Dendritic cell treated with granulocyte-macrophage colony-stimulating factor and Interleukin-4, amounts not matched to agents 40 ng/mL and 50 ng/mL, for 4 days (primary cell): ENCODE measurements at regions of chr6 and their contacts with region 1.

Region 1: GRCh38 chr6:134480593-134480992 is 162.7 kb upstream of the SGK1 start:
- H3K4me3 Mint-ChIP-seq: no peak overlapping the region
- H3K27ac Mint-ChIP-seq: no peak overlapping the region
- H3K4me1 Mint-ChIP-seq: peaks cover 7% of the 10 kb centered on the region
- H3K27me3 Mint-ChIP-seq: peaks cover 6% of the 10 kb centered on the region

Region 2: GRCh38 chr6:134363318-134364039 is 117.1 kb before region 1 on chr6:
- intact Hi-C with region 1: no loop called
- H3K4me3 Mint-ChIP-seq: no peak overlapping the region
- H3K27ac Mint-ChIP-seq: no peak overlapping the region
- H3K4me1 Mint-ChIP-seq: peaks cover 14% of the 10 kb centered on the region
- H3K27me3 Mint-ChIP-seq: no peaks in the 10 kb centered on the region

Region 3: GRCh38 chr6:134619789-134620188 is 139.2 kb after region 1 on chr6:
- intact Hi-C with region 1: loop called (anchors 10 kb)
- H3K4me3 Mint-ChIP-seq: no peak overlapping the region
- H3K27ac Mint-ChIP-seq: no peak overlapping the region
- H3K4me1 Mint-ChIP-seq: peaks cover 21% of the 10 kb centered on the region
- H3K27me3 Mint-ChIP-seq: peaks cover 16% of the 10 kb centered on the region